RWPE1 (cell line): ENCODE measurements at regions of chr12 and their contacts with region 1.

Region 1: DNA sequence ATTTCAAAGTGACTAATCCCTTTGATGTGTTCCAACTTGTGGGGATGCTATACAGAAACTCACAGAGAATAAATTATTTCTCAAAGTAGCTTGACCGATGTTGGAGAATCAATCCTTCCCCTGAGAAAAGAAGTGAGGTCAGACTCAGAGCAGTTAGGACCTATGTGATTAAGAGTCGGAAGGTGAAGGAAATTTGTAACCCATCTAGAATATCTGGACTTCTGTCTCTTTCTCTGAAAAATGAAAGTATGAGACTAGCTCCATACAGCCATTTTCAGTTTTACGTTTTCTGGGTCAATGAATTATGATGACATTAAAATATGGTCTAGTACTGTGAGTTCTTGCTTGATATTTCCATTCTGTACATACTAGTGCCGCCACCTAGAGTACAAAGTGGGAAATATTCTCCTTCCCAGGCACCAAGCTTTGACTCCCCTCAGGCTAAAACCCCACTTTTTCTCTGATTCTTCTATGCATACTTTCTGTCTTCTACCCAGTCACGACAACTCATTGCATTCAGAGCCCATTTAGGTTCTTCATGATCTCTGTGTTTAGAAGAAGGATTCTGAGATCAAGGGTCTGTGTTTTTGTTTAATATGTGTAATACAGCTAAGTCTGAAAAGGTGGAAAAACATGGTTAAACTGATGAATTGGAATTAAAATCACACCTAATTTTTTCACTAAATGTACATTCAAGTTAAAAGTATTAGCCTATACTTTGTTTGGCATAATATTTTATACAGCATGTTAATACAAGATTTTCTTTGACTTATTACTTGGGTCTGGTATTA is 6.9 kb upstream of the NTS start:
- DNase-seq: peak; percentile 62
- H3K27ac ChIP-seq: no peak overlapping the region
- CTCF ChIP-seq: peak; percentile 82

Region 2: GRCh38 chr12:85476756-85477155 is 390.4 kb before region 1 on chr12:
- CTCF ChIA-PET with region 1: interaction called, 11 read pairs
- POLR2A ChIA-PET with region 1: no interaction called
- DNase-seq: no peak
- H3K27ac ChIP-seq: no peak overlapping the region
- CTCF ChIP-seq: no peak

Region 3: DNA sequence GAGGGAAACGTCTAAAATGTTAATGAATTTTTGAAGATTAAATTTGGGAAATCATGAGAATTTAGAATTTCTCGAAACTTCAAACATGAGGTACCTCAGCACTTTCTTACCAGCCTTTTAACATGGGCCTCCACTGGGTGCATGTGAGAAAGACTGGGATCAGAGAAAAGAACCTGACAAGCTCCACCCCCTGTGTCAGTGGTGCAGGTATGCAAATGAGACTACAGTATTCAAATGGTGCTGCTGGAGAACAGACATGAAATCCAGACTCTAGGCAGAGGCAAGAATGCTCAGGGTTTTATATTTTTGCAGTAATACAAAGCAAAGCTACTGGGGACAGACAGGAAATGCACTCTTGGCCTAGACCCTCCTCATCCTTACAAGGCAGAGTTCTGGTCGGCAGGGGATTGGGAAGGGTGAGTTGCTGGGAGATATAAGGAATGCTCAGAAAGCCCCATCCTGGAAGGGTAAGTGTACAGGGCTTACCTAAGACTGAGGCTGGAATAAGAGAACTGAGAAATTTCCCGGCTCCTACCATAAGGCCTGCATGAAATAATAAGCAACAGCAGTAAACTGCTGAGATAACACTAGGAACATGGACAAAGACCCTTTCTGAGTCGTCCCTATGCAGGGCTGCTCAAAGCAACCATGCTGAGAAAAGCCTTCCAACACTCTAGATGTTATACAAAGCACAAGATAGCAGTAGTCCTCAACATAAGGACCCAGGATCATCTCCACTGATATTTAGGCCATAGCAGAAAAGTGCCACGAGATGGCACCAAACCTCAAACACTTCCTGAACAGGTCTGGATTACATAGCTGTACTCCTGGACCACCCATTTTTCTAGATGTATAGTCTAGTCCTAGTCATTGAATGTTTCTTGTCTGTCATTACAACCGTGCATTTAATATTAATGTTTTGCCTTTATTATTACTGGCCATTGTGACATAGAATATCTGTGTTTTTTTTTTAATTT is 291.8 kb before region 1 on chr12:
- CTCF ChIA-PET with region 1: interaction called, 28 read pairs
- POLR2A ChIA-PET with region 1: no interaction called
- DNase-seq: peak; percentile 63
- H3K27ac ChIP-seq: no peak overlapping the region
- CTCF ChIP-seq: peak; percentile 71

Region 4: GRCh38 chr12:85733221-85733840 is 133.8 kb before region 1 on chr12:
- CTCF ChIA-PET with region 1: no interaction called
- POLR2A ChIA-PET with region 1: no interaction called
- DNase-seq: no peak
- H3K27ac ChIP-seq: no peak overlapping the region
- CTCF ChIP-seq: no peak

Region 5: DNA sequence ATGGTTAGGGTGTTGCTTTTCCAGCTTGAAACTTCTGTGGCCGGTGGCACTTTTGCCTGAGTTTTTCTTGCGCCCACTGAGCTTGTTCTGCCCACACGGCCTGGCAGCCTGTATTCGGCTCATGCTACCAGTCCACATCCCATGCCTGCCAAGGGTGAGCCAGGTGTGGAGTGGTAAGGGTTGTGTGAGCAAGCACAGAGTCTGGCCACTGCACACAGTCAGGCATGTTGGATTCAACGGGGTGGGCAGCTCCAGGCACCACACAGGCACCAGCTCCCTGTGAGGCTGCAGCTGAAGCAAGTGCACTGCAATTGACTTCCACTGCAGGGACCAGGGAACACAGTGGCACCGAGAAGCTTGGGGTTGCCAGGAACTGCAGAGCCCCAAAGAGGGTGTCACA is 11.9 kb before region 1 on chr12:
- CTCF ChIA-PET with region 1: interaction called, 18 read pairs
- POLR2A ChIA-PET with region 1: no interaction called
- DNase-seq: no peak
- H3K27ac ChIP-seq: no peak overlapping the region
- CTCF ChIP-seq: no peak

Region 6: GRCh38 chr12:85946370-85946769 is 79.2 kb after region 1 on chr12:
- CTCF ChIA-PET with region 1: no interaction called
- POLR2A ChIA-PET with region 1: no interaction called
- DNase-seq: no peak
- H3K27ac ChIP-seq: no peak overlapping the region
- CTCF ChIP-seq: no peak